Aorta (tissue), 5 donors: ENCODE measurements at regions of chr9 and their contacts with region 1.

Region 1: GRCh38 chr9:128911529-128912035 is 9.2 kb upstream of the PHYHD1 start:
- DNase-seq: peak; percentile 91 to 95
- ATAC-seq: peak; percentile 74
- H3K4me3 ChIP-seq: no peak overlapping the region
- H3K27ac ChIP-seq: peak overlapping the region; percentile 43 to 88
- H3K4me1 ChIP-seq: peaks cover 0 to 11% of the 10 kb centered on the region in 2 donors
- H3K27me3 ChIP-seq: no peaks in the 10 kb centered on the region

Region 2: GRCh38 chr9:128361986-128362646 is 549.5 kb before region 1 on chr9:
- intact Hi-C with region 1: no loop called
- DNase-seq: peak; percentile 90 to 91
- ATAC-seq: peak; percentile 94
- H3K4me3 ChIP-seq: no peak overlapping the region
- H3K27ac ChIP-seq: no peak overlapping the region
- H3K4me1 ChIP-seq: no peaks in the 10 kb centered on the region
- H3K27me3 ChIP-seq: no peaks in the 10 kb centered on the region

Region 3: DNA sequence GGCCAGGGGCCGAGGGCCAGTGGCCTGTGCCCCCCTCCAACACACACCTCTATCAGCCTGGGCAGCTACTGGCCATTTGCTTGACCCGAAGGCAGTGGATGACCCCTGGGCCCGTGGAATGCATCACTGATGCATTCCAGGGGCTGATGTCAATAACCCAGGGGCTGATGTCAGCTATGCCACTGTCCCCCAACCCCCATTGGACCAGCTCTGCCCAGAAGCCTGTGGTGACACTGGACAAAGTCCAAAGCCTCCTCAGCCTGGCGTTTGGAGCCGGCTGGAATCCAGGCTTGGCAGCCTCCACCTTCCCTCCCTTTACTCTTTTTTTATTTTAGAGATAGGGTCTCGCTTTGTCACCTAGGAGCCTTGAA is 35.8 kb before region 1 on chr9:
- intact Hi-C with region 1: loop called in 1 of 2 experiments (anchors 5 kb)
- DNase-seq: peak; percentile 52 to 71
- ATAC-seq: peak; percentile 55
- H3K4me3 ChIP-seq: no peak overlapping the region
- H3K27ac ChIP-seq: no peak overlapping the region
- H3K4me1 ChIP-seq: peaks cover 0 to 4% of the 10 kb centered on the region in 2 donors
- H3K27me3 ChIP-seq: no peaks in the 10 kb centered on the region

Region 4: GRCh38 chr9:128927731-128928411 is 16.3 kb after region 1 on chr9:
- intact Hi-C with region 1: no loop called
- DNase-seq: no peak
- ATAC-seq: peak; percentile 86
- H3K4me3 ChIP-seq: no peak overlapping the region
- H3K27ac ChIP-seq: no peak overlapping the region
- H3K4me1 ChIP-seq: no peaks in the 10 kb centered on the region
- H3K27me3 ChIP-seq: no peaks in the 10 kb centered on the region